ENCODE measurements at regions of chr13 and their contacts with region 1.

Region 1: GRCh38 chr13:92951273-92951890 is 275.2 kb upstream of the GPC6 start:
- DNase-seq: no peak
- ATAC-seq: no peak
- H3K4me3 ChIP-seq: no peak overlapping the region
- H3K4me3 Mint-ChIP-seq: no peak overlapping the region
- H3K27ac ChIP-seq: no peak overlapping the region
- H3K27ac Mint-ChIP-seq: no peak overlapping the region
- H3K4me1 ChIP-seq: no peaks in the 10 kb centered on the region
- H3K4me1 Mint-ChIP-seq: no peaks in the 10 kb centered on the region
- H3K27me3 ChIP-seq: no peaks in the 10 kb centered on the region
- H3K27me3 Mint-ChIP-seq: no peaks in the 10 kb centered on the region
- CTCF ChIP-seq: no peak

Region 2: DNA sequence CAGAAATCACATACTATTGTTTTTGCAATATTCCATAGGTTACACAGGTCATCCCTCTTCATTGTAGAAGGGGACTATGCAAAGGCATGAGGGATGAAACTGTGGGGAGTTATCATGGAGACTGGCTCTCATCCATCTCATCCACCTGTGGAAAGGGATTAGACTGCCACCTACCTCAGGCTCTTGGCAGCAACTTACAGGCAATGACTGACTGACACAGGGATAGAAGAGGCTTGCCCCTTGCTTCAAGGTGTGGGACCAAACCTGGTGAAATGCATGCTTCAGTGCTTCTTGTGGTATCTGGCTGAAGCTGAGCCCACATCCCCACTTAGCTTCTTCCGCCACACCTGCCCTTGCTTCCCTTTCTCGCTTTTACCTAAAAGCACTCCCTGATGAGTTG is 1211.6 kb before region 1 on chr13:
- CTCF ChIA-PET with region 1: no interaction called
- POLR2A ChIA-PET with region 1: no interaction called
- intact Hi-C with region 1: no loop called
- DNase-seq: no peak
- ATAC-seq: no peak
- H3K4me3 ChIP-seq: no peak overlapping the region
- H3K4me3 Mint-ChIP-seq: no peak overlapping the region
- H3K27ac ChIP-seq: no peak overlapping the region
- H3K27ac Mint-ChIP-seq: no peak overlapping the region
- H3K4me1 ChIP-seq: no peaks in the 10 kb centered on the region
- H3K4me1 Mint-ChIP-seq: no peaks in the 10 kb centered on the region
- H3K27me3 ChIP-seq: no peaks in the 10 kb centered on the region
- H3K27me3 Mint-ChIP-seq: no peaks in the 10 kb centered on the region
- CTCF ChIP-seq: no peak

Region 3: GRCh38 chr13:93045836-93046235 is 94.5 kb after region 1 on chr13:
- CTCF ChIA-PET with region 1: no interaction called
- POLR2A ChIA-PET with region 1: no interaction called
- intact Hi-C with region 1: no loop called
- DNase-seq: no peak
- ATAC-seq: no peak
- H3K4me3 ChIP-seq: no peak overlapping the region
- H3K4me3 Mint-ChIP-seq: no peak overlapping the region
- H3K27ac ChIP-seq: no peak overlapping the region
- H3K27ac Mint-ChIP-seq: no peak overlapping the region
- H3K4me1 ChIP-seq: no peaks in the 10 kb centered on the region
- H3K4me1 Mint-ChIP-seq: no peaks in the 10 kb centered on the region
- H3K27me3 ChIP-seq: no peaks in the 10 kb centered on the region
- H3K27me3 Mint-ChIP-seq: no peaks in the 10 kb centered on the region
- CTCF ChIP-seq: no peak

Region 4: GRCh38 chr13:93262729-93263345 is 311.5 kb after region 1 on chr13:
- CTCF ChIA-PET with region 1: no interaction called
- POLR2A ChIA-PET with region 1: no interaction called
- intact Hi-C with region 1: loop called in 1 of 2 experiments (anchors 10 kb)
- DNase-seq: no peak
- ATAC-seq: no peak
- H3K4me3 ChIP-seq: no peak overlapping the region
- H3K4me3 Mint-ChIP-seq: no peak overlapping the region
- H3K27ac ChIP-seq: no peak overlapping the region
- H3K27ac Mint-ChIP-seq: no peak overlapping the region
- H3K4me1 ChIP-seq: no peaks in the 10 kb centered on the region
- H3K4me1 Mint-ChIP-seq: no peaks in the 10 kb centered on the region
- H3K27me3 ChIP-seq: no peaks in the 10 kb centered on the region
- H3K27me3 Mint-ChIP-seq: no peaks in the 10 kb centered on the region
- CTCF ChIP-seq: no peak